ENCODE measurements at regions of chr21 and their contacts with region 1.

Region 1: GRCh38 chr21:25370311-25370744 is 237.0 kb downstream of the MRPL39 start:
- DNase-seq: peak; percentile 97
- ATAC-seq: peak; percentile 92
- H3K4me3 ChIP-seq: no peak overlapping the region
- H3K27ac ChIP-seq: peak overlapping the region; percentile 84
- H3K4me1 ChIP-seq: peaks cover 45% of the 10 kb centered on the region
- H3K27me3 ChIP-seq: no peaks in the 10 kb centered on the region
- CTCF ChIP-seq: no peak

Region 2: DNA sequence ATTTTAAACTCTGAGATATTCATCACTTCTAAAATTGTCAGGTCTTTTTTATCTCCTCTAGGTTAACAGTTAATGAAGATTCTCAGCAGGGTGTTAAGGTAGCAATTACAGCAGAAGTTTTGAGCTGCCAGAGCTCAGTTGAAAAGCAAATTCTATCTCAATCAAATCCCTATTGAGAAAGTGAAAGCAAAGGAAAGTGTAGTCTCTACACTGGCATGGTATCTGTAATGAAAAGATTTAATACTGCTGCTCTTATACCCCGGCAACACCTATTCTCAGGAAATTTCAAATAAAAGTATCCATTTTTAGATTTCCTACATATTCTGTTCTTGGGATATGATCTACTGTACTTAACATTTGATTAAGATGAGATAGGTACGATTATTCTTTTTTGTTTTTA is 676.5 kb before region 1 on chr21:
- CTCF ChIA-PET with region 1: no interaction called
- POLR2A ChIA-PET with region 1: no interaction called
- intact Hi-C with region 1: loop called (anchors 10 kb)
- DNase-seq: peak; percentile 3
- ATAC-seq: no peak; the same call in 1 of the 2 replicates
- H3K4me3 ChIP-seq: peak overlapping the region; percentile 62
- H3K27ac ChIP-seq: no peak overlapping the region
- H3K4me1 ChIP-seq: no peaks in the 10 kb centered on the region
- H3K27me3 ChIP-seq: no peaks in the 10 kb centered on the region
- CTCF ChIP-seq: no peak

Region 3: DNA sequence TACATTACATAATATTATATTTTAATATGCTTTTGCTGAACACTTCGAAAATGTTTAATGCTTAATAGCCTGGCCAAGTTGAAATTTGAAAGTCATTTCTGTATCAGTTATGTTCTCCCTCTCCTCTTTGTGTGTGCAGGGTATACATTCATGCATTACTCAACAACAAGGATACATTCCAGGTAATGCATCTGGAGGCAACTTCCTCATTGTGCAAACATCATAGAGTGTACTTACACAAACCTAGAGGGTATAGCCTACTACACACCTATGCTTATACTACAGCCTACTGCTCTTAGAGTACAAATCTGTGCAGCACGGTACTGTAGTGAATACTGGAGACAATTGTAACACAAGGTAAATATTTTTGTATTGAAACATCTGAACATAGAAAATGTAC is 170.4 kb before region 1 on chr21:
- CTCF ChIA-PET with region 1: no interaction called
- POLR2A ChIA-PET with region 1: no interaction called
- intact Hi-C with region 1: no loop called
- DNase-seq: peak; percentile 54
- ATAC-seq: peak; percentile 85
- H3K4me3 ChIP-seq: no peak overlapping the region
- H3K27ac ChIP-seq: no peak overlapping the region
- H3K4me1 ChIP-seq: 0 out of 2 replicates have a peak, but pooled peaks cover 5% of the 10 kb centered on the region
- H3K27me3 ChIP-seq: no peaks in the 10 kb centered on the region
- CTCF ChIP-seq: no peak

Region 4: DNA sequence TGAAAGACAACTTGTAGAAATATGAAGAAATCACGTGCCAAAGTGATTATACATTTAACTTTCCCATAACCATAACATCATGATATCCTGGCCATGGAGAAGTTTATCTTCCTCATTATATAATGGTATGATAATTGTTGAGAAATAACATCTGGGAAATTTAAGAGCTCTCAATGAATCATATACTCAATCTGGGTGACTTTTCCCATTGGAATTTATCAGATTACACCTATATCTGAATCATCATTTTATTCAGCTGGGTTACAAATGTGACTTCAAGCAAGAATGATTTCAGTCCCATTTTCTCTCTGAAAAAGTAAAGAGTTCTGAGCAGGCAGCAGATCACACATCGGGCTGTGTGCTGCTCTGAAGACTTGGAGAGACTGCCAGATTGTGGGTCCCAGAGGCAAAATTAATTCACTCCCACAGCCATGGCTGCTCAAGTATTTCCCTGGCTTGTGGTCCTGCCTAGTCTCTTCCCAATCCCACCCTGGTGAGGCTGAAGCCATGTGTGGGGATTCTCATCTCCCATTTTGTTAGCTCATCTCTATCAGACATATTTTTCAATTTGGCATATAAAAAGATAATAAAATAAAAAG is 41.0 kb before region 1 on chr21:
- CTCF ChIA-PET with region 1: interaction called, 5 read pairs
- POLR2A ChIA-PET with region 1: interaction called, 3 read pairs
- intact Hi-C with region 1: loop called (anchors 1 kb)
- DNase-seq: peak; percentile 91
- ATAC-seq: peak; percentile 76
- H3K4me3 ChIP-seq: no peak overlapping the region
- H3K27ac ChIP-seq: peak overlapping the region; percentile 80
- H3K4me1 ChIP-seq: peaks cover 32% of the 10 kb centered on the region
- H3K27me3 ChIP-seq: no peaks in the 10 kb centered on the region
- CTCF ChIP-seq: no peak

Region 5: DNA sequence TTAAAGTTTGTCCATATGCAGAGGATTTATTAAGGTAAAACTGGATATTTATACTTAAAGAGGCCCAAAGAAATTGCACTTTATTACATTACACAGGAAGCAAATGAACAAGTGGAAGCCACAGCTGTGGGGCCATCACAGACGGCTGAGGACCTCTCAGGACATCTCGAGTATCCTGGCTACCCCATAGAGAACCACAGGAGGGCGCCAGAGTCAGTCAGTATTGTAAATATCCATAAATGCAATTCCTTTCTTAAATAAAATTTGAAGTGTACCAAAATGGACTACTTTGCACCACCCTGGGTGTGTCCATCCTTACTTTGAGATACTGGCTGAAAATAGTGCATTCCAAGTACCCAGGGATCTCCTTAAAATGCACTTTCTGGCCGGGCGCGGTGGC is 20.3 kb before region 1 on chr21:
- CTCF ChIA-PET with region 1: interaction called, 13 read pairs
- POLR2A ChIA-PET with region 1: no interaction called
- intact Hi-C with region 1: no loop called
- DNase-seq: peak; percentile 78
- ATAC-seq: peak; percentile 72
- H3K4me3 ChIP-seq: no peak overlapping the region
- H3K27ac ChIP-seq: no peak overlapping the region
- H3K4me1 ChIP-seq: peaks cover 12% of the 10 kb centered on the region
- H3K27me3 ChIP-seq: no peaks in the 10 kb centered on the region
- CTCF ChIP-seq: peak; percentile 82

Region 6: DNA sequence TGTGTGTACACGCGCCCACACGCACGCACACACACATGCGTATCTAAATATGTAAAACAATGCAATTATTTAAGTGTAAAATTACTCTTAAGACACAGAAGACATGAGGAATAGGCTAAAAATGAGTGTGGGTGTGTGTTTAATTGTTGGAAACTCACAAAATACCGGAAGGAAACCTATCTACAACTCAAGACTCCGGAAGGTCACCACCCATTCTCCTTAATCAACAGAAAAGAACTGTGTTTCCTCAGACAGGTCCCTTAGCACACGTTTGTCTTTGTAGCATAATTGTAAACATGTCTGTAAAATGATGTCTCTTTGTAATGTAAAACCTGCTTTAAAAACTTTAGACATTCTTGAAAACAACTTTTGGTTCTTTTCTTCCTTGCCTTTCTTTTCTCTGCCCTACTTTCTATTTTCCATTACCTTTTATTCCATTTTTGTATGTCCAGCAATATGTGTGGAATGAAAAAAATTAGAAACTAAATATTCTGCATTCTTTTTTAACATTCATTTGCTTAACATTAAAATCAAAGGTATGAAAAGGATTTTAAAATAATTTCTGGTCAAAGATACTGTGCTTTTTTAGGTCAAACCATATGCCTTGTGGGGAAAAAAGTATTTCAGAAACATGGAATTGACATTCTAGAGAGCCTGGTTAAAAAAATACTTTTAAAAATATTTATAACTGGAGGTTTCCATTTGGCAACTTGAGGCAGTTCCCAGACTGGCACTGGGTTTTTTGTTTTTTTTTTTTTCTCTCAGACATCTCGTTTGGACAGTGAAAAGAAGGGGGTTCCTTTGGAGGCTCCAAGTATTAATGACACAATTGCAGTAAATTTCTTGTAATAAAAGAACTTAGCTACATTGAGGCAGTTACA is 318.2 kb after region 1 on chr21:
- CTCF ChIA-PET with region 1: no interaction called
- POLR2A ChIA-PET with region 1: no interaction called
- intact Hi-C with region 1: no loop called
- DNase-seq: no peak
- ATAC-seq: no peak
- H3K4me3 ChIP-seq: no peak overlapping the region
- H3K27ac ChIP-seq: no peak overlapping the region
- H3K4me1 ChIP-seq: no peaks in the 10 kb centered on the region
- H3K27me3 ChIP-seq: no peaks in the 10 kb centered on the region
- CTCF ChIP-seq: no peak

Measured in PC-3 (cell line).